ENCODE measurements at regions of chr13 and their contacts with region 1.

Region 1: DNA sequence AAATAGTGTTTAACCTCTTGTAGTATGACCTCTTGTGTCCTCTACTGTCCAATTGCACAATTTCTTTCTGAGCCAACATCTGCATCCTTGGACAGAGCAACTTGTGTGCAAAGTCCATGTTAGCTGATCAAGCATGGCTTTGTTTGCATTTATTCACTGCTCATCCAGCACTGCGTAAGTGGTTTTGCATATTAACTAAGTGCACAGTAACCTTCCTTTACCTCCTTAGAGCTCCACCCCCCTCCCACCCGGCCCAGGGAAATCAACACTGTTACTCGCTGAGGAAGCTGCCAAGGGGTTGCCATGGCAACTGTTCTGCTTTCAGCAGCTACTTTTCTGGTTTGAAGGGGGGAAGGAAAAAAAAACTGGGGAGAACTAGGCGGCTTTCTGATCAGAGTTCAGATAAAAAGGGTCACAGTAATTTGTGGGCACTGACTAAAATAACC is 153.5 kb upstream of the KLF12 start:
- DNase-seq: peak; percentile 95 to 97 (median 97)
- H3K4me3 ChIP-seq: peak overlapping the region in 6 of 7 experiments; percentile 29 to 76 (median 54)
- H3K27ac ChIP-seq: peak overlapping the region; percentile 23 to 75
- H3K4me1 ChIP-seq: peaks cover 17 to 38% (median 25%) of the 10 kb centered on the region in 4 experiments
- H3K27me3 ChIP-seq: no peaks in the 10 kb centered on the region

Region 2: DNA sequence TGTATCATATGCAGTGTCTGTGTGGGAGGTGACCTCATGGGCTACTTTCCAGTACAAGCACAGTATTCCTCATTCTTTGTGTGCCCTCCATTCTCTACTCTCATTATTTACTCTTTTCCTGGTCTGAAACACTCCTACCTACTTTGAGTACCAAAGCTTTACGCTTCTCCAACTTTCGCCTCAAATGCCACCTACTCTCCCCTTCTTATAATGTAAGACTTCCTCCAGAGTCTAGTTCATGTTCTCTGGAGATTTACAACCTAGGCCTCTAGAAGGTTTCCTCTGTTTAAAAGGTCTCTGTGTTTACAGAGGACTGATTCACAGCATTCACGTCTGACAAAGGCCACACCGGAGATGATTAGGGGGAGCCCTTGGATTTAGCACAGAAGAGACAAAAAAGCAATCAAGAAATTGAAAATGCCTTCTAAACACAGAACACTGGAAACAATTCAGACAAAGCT is 455.6 kb before region 1 on chr13:
- CTCF ChIA-PET with region 1: interaction called, 10 read pairs
- POLR2A ChIA-PET with region 1: no interaction called
- DNase-seq: no peak
- H3K4me3 ChIP-seq: no peak overlapping the region
- H3K27ac ChIP-seq: peak overlapping the region in 1 of 2 experiments; percentile 39
- H3K4me1 ChIP-seq: peaks cover 0 to 8% (median 2%) of the 10 kb centered on the region in 4 experiments
- H3K27me3 ChIP-seq: no peaks in the 10 kb centered on the region